ENCODE measurements at regions of chr4 and their contacts with region 1.

Region 1: GRCh38 chr4:2761035-2761923 is 5.1 kb upstream of the TNIP2 start:
- DNase-seq: no peak
- ATAC-seq: no peak
- H3K4me3 Mint-ChIP-seq: no peak overlapping the region
- H3K27ac Mint-ChIP-seq: no peak overlapping the region
- H3K4me1 Mint-ChIP-seq: peaks cover 23% of the 10 kb centered on the region
- H3K27me3 Mint-ChIP-seq: no peaks in the 10 kb centered on the region
- CTCF ChIP-seq: no peak

Region 2: DNA sequence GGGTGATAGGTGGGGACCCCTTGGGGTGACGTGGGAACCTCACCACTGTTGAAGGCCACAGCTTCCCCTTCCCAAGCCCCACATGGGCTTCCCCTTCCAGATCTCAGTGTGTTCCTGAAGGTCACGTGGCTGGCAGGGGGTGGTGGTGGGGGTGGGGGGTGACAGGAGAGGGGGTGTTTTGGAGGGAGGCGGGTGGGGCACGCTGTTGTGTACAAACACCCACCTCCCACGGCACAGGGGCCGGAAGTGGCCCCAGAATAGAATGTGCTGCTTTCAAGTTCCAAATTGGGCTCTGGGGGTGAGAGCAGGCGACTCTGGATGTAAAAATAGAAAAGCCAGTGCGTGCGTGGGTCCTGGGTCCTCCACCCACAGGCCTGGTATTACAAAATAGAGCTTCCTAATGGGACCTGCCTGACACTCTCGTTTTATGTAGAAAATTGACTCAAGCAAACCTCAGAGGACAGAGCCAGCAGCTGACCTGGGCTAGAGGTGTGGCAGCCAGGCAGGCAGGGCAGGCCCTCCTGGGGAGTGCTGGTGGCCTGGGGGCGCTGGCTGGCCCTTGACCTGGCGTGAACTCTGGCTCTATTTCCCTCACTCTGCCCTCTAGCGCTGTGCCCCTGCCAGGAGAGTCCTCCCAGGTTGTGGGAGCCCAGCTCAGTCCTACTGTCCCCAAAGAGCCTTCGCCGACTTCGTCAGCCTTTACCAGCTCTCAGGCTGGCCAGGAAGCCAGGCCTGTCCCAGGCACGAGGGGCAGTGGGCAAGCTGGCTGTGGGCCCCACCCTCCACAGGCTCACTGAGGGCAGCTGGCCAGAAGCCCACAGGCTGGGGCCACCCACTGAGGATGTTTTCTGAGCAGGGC is 26.2 kb after region 1 on chr4:
- CTCF ChIA-PET with region 1: no interaction called
- POLR2A ChIA-PET with region 1: interaction called, 6 read pairs
- intact Hi-C with region 1: loop called (anchors 2 kb)
- DNase-seq: peak; percentile 56
- ATAC-seq: peak; percentile 50
- H3K4me3 Mint-ChIP-seq: peak overlapping the region; percentile 41
- H3K27ac Mint-ChIP-seq: peak overlapping the region; percentile 93
- H3K4me1 Mint-ChIP-seq: peaks cover 72% of the 10 kb centered on the region
- H3K27me3 Mint-ChIP-seq: no peaks in the 10 kb centered on the region
- CTCF ChIP-seq: no peak

Region 3: DNA sequence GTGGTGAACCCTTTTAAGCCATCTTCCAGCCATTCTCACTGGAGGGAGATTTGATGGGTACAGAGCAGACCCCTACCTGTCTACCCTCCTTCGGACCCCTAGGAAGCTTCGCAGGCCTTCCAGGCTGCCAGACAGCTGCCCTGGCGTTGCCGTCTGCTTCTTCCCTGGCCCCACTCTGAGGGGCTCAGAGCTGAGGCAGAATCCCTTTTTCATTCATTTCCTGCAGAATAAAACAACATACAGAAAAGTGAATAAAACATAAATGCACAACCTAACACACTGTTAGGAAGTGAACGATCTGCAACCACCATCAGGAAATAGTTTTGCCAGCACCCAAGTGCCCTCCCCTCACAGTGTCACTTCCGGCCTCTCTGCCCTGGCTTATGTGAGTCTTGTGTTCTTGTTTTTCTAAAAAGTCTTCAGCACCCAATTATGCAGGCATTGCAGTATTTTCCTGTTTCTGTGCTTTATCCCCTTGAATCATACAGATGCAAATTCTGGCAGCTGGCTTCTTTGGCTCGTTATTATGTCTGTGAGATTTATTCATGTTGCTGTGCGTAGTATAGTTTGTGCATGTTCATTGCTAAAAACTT is 76.7 kb after region 1 on chr4:
- CTCF ChIA-PET with region 1: interaction called, 4 read pairs
- POLR2A ChIA-PET with region 1: interaction called, 7 read pairs
- intact Hi-C with region 1: loop called (anchors 1 kb)
- DNase-seq: peak; percentile 32
- ATAC-seq: peak; percentile 54
- H3K4me3 Mint-ChIP-seq: peak overlapping the region; percentile 74
- H3K27ac Mint-ChIP-seq: peak overlapping the region; percentile 81
- H3K4me1 Mint-ChIP-seq: peaks cover 74% of the 10 kb centered on the region
- H3K27me3 Mint-ChIP-seq: no peaks in the 10 kb centered on the region
- CTCF ChIP-seq: no peak

Region 4: GRCh38 chr4:2934813-2935761 is 173.8 kb after region 1 on chr4:
- CTCF ChIA-PET with region 1: interaction called, 3 read pairs
- POLR2A ChIA-PET with region 1: interaction called, 7 read pairs
- intact Hi-C with region 1: loop called (anchors 1 kb)
- DNase-seq: peak; percentile 99
- ATAC-seq: peak; percentile 46
- H3K4me3 Mint-ChIP-seq: peak overlapping the region; percentile 83
- H3K27ac Mint-ChIP-seq: peak overlapping the region; percentile 59
- H3K4me1 Mint-ChIP-seq: peaks cover 66% of the 10 kb centered on the region
- H3K27me3 Mint-ChIP-seq: no peaks in the 10 kb centered on the region
- CTCF ChIP-seq: no peak

Region 5: GRCh38 chr4:3041192-3042142 is 280.2 kb after region 1 on chr4:
- CTCF ChIA-PET with region 1: no interaction called
- POLR2A ChIA-PET with region 1: no interaction called
- intact Hi-C with region 1: loop called (anchors 2 kb)
- DNase-seq: peak; percentile 57
- ATAC-seq: peak; percentile 53
- H3K4me3 Mint-ChIP-seq: peak overlapping the region; percentile 87
- H3K27ac Mint-ChIP-seq: peak overlapping the region; percentile 93
- H3K4me1 Mint-ChIP-seq: peaks cover 79% of the 10 kb centered on the region
- H3K27me3 Mint-ChIP-seq: no peaks in the 10 kb centered on the region
- CTCF ChIP-seq: no peak